A549 (cell line): ENCODE measurements at regions of chr9 and their contacts with region 1.

Region 1: GRCh38 chr9:35732122-35732799 is at the starts of genes CREB3 and TLN1:
- DNase-seq: peak; percentile 98 to 99
- ATAC-seq: peak; percentile 82 to 93
- H3K4me3 ChIP-seq: peak within 1 kb of the TSS; percentile 87
- H3K27ac ChIP-seq: peak within 1 kb of the TSS; percentile 95 to 96
- H3K4me1 ChIP-seq: peaks cover 52% of the 10 kb centered on the region
- CTCF ChIP-seq: peak; percentile 40
- EP300 ChIP-seq: no peak
- POLR2A ChIP-seq: peak; percentile 64
- RAD21 ChIP-seq: peak in 1 of 2 experiments; percentile 36; a peak in 2 of 5 replicates
- polyA plus RNA-seq, gene CREB3: 33.3 and 36.0 TPM in 2 replicates
- polyA plus RNA-seq, gene TLN1: 65.5 and 72.1 TPM in 2 replicates

Region 2: GRCh38 chr9:35079426-35080341 is 652.6 kb before region 1 on chr9 and contains the start of gene FANCG:
- CTCF ChIA-PET with region 1: interaction called, 3 read pairs
- POLR2A ChIA-PET with region 1: interaction called, 13 read pairs
- DNase-seq: peak; percentile 94 to 95
- ATAC-seq: peak; percentile 96
- H3K4me3 ChIP-seq: peak within 1 kb of the TSS; percentile 71
- H3K27ac ChIP-seq: peak within 1 kb of the TSS; percentile 86 to 96
- H3K4me1 ChIP-seq: peaks cover 14% of the 10 kb centered on the region; the same call in 2 of the 3 replicates
- CTCF ChIP-seq: no peak
- EP300 ChIP-seq: no peak
- POLR2A ChIP-seq: peak; percentile 88
- RAD21 ChIP-seq: no peak
- polyA plus RNA-seq, gene FANCG: 34.9 and 39.7 TPM in 2 replicates

Region 3: DNA sequence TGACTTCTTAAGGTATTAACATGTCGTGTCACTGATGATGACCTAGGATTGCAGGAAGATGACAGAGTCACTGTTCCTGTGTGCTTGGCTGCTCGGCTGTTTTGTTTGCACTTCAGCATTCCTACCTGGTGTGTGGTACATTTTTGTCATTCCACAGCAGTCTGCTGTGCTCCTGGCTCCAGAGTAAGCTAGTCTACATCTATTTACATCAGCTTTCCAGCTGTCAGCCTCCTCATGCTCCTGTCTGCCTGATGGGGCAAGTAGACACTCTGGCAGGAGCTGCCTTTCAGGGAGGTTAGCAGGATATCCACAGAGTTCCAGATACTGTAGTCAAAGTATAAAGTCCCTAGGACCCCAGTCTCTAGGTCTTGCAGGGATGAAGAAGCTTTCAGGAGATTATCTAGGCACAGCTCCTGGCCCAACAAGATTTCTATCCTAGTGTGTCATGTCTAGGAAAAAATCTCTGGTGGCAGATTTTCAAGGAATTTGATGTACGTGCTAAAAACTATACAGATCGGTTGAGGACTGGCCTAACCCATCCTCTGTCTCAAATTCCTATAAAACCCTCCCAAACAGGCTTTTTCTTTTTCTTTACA is 213.9 kb before region 1 on chr9:
- CTCF ChIA-PET with region 1: no interaction called
- POLR2A ChIA-PET with region 1: no interaction called
- DNase-seq: peak; percentile 95 to 98
- ATAC-seq: peak; percentile 91
- H3K4me3 ChIP-seq: no peak overlapping the region
- H3K27ac ChIP-seq: peak overlapping the region; percentile 95 to 96
- H3K4me1 ChIP-seq: peaks cover 96% of the 10 kb centered on the region
- CTCF ChIP-seq: no peak
- EP300 ChIP-seq: peak; percentile 99
- POLR2A ChIP-seq: no peak
- RAD21 ChIP-seq: peak; percentile 35 to 69

Region 4: DNA sequence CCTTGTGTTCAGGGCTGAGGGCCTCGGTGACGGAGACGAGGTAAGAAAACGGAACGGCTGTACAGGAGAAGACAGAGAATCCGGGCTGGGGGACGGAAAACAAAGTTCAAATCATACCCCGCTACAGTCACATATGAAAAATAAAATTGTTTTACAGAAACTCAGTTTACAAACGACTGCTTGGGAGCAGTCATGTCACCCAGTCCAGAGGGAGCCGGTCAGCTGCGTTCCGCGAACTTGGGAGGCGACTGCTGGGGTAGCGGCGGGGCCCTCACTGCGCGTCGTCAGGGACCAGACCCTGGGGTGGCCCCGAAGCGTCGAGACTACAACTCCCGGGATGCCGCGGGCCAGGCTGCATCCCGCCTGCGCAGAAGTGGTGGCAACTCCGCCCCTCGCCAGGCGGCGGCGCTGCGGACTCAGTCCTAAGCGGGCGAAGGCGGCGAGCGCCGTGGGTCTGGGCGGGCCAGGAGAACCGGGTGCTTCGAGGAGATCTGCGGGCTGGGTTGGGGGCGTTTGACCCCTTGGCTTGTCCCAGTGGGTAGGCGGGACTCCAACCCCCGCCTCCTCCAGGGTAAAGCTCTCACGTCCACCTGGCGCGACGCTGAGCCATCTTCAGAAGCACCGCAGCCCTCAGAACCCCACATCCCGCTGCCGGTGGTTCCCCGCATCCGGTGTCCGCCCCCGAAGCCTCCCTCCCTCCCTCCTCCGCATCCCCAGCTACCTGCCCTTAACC is 85.6 kb before region 1 on chr9:
- CTCF ChIA-PET with region 1: interaction called, 20 read pairs
- POLR2A ChIA-PET with region 1: interaction called, 3 read pairs
- DNase-seq: peak; percentile 90 to 95
- ATAC-seq: peak; percentile 93 to 97
- H3K4me3 ChIP-seq: peak overlapping the region; percentile 52
- H3K27ac ChIP-seq: peak overlapping the region; percentile 92 to 93
- H3K4me1 ChIP-seq: peaks cover 13% of the 10 kb centered on the region
- CTCF ChIP-seq: peak; percentile 87
- EP300 ChIP-seq: no peak
- POLR2A ChIP-seq: peak; percentile 66
- RAD21 ChIP-seq: peak; percentile 81 to 91

Region 5: GRCh38 chr9:35690431-35691333 is 41.6 kb before region 1 on chr9:
- CTCF ChIA-PET with region 1: interaction called, 758 read pairs
- POLR2A ChIA-PET with region 1: interaction called, 24 read pairs
- DNase-seq: peak; percentile 68 to 71
- ATAC-seq: peak; percentile 60 to 71
- H3K4me3 ChIP-seq: peak overlapping the region; percentile 87
- H3K27ac ChIP-seq: peak overlapping the region; percentile 93 to 99
- H3K4me1 ChIP-seq: peaks cover 37% of the 10 kb centered on the region
- CTCF ChIP-seq: no peak
- EP300 ChIP-seq: no peak
- POLR2A ChIP-seq: 0 out of 2 replicates have a peak, but pooled peaks have one; percentile 30
- RAD21 ChIP-seq: no peak

Region 6: GRCh38 chr9:35748858-35749514 is 16.7 kb after region 1 on chr9 and contains the starts of genes GBA2 and RGP1:
- CTCF ChIA-PET with region 1: interaction called, 116 read pairs
- POLR2A ChIA-PET with region 1: interaction called, 41 read pairs
- DNase-seq: peak; percentile 62 to 81
- ATAC-seq: peak; percentile 91 to 93
- H3K4me3 ChIP-seq: peak within 1 kb of the TSS; percentile 69
- H3K27ac ChIP-seq: peak within 1 kb of the TSS; percentile 84 to 99
- H3K4me1 ChIP-seq: peaks cover 30% of the 10 kb centered on the region
- CTCF ChIP-seq: no peak
- EP300 ChIP-seq: no peak
- POLR2A ChIP-seq: peak; percentile 42; the same call in 1 of the 2 replicates
- RAD21 ChIP-seq: no peak
- polyA plus RNA-seq, gene GBA2: 40.0 and 47.4 TPM in 2 replicates
- polyA plus RNA-seq, gene RGP1: 16.6 and 20.2 TPM in 2 replicates